Common myeloid progenitor, CD34-positive (primary cell): ENCODE measurements at regions of chr7 and their contacts with region 1.

Region 1: GRCh38 chr7:129218514-129219062 is 6.2 kb upstream of the AHCYL2 start:
- DNase-seq: peak; percentile 67 to 77 (median 72)
- H3K4me3 ChIP-seq: no peak overlapping the region
- H3K27ac ChIP-seq: no peak overlapping the region
- H3K4me1 ChIP-seq: peaks cover 8 to 14% (median 9%) of the 10 kb centered on the region in 4 experiments
- H3K27me3 ChIP-seq: no peaks in the 10 kb centered on the region

Region 2: DNA sequence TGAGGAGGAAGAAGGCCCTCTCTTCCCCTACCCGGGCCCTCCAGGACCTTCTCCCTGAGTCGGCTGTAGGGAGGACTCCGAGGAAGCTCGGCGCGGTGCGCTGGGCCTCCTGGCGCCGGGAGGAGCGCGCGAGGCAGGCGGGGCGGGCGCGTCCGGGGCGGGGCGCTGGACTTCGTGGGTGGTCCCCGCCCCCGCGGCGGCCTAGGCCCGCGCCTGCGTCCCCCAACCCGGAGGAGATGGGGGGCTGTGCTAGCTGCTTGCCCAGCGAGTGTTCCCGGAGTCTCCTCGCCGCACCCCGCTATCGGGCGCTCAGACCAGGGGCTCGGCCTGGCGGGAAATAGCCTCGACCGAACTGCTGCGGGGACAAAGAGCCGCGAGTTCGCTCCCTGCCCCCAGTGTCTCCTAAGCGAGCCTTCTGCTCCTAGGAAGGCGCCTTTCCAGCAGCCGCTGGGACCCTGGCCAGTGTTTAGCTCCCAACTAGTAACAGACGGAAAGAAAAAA is 49.4 kb before region 1 on chr7:
- CTCF ChIA-PET with region 1: interaction called, 170 read pairs
- POLR2A ChIA-PET with region 1: interaction called, 6 read pairs
- DNase-seq: peak in 2 of 3 donors; percentile 46 to 65
- H3K4me3 ChIP-seq: peak overlapping the region; percentile 50 to 85 (median 73)
- H3K27ac ChIP-seq: peak overlapping the region in 1 of 2 experiments; percentile 73
- H3K4me1 ChIP-seq: peaks cover 3 to 18% (median 14%) of the 10 kb centered on the region in 4 experiments
- H3K27me3 ChIP-seq: no peaks in the 10 kb centered on the region

Region 3: DNA sequence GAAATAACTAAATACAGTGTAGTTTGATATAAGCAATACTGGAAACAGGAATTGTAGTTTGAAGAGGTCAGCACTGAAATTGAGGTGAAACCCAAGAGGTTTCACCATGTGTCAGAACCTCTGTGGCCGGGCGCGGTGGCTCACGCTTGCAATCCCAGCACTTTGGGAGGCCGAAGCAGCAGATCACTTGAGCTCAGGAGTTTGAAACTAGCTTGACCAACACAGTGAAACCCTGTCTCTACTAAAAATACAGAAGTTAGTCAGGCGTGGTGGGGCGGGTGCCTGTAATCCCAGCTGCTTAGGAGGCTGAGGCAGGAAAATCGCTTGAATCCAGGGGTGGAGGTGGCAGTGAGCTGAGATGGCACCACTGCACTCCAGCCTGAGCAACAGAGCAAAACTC is 20.0 kb after region 1 on chr7:
- CTCF ChIA-PET with region 1: interaction called, 10 read pairs
- POLR2A ChIA-PET with region 1: no interaction called
- DNase-seq: no peak
- H3K4me3 ChIP-seq: no peak overlapping the region
- H3K27ac ChIP-seq: no peak overlapping the region
- H3K4me1 ChIP-seq: no peaks in the 10 kb centered on the region
- H3K27me3 ChIP-seq: no peaks in the 10 kb centered on the region

Region 4: GRCh38 chr7:129271500-129272355 is 53.1 kb after region 1 on chr7:
- CTCF ChIA-PET with region 1: interaction called, 157 read pairs
- POLR2A ChIA-PET with region 1: no interaction called
- DNase-seq: peak; percentile 83 to 91 (median 88)
- H3K4me3 ChIP-seq: peak overlapping the region in 1 of 7 experiments; percentile 47
- H3K27ac ChIP-seq: no peak overlapping the region
- H3K4me1 ChIP-seq: peaks cover 10 to 14% (median 13%) of the 10 kb centered on the region in 4 experiments
- H3K27me3 ChIP-seq: no peaks in the 10 kb centered on the region

Region 5: DNA sequence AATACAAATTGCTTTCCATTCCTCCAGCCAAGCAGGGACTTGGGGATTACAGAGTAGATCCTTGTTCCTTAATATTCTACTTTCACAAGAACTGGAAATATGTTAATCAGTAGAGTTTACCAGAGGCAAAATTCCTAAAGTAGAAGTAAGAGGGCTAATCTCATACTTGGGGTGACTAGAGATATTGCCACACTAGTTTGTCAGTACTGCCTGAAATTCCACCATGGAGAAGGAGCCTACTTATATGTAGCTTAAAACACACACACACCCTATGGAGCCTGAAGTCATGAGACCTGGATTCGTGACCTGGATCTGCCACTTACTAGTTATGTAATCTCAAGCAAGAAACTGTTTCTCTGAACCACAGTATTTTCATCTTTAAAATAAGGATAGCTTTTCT is 249.5 kb after region 1 on chr7:
- CTCF ChIA-PET with region 1: interaction called, 22 read pairs
- POLR2A ChIA-PET with region 1: no interaction called
- DNase-seq: no peak
- H3K4me3 ChIP-seq: no peak overlapping the region
- H3K27ac ChIP-seq: no peak overlapping the region
- H3K4me1 ChIP-seq: no peaks in the 10 kb centered on the region
- H3K27me3 ChIP-seq: no peaks in the 10 kb centered on the region